Calu3 (cell line): ENCODE measurements at regions of chr17 and their contacts with region 1.

Region 1: GRCh38 chr17:75855310-75856081 is at the start of gene WBP2:
- DNase-seq: peak; percentile 95
- H3K4me3 Mint-ChIP-seq: no peak within 1 kb of the TSS
- H3K27ac Mint-ChIP-seq: no peak within 1 kb of the TSS
- H3K4me1 Mint-ChIP-seq: peaks cover 8% of the 10 kb centered on the region
- H3K27me3 Mint-ChIP-seq: no peaks in the 10 kb centered on the region
- CTCF ChIP-seq: no peak
- total RNA-seq, gene WBP2: 126 and 133 TPM in 2 replicates

Region 2: GRCh38 chr17:75978938-75979704 is 123.6 kb after region 1 on chr17 and contains the starts of genes ACOX1 and TEN1:
- CTCF ChIA-PET with region 1: interaction called, 11 read pairs
- intact Hi-C with region 1: no loop called
- DNase-seq: peak; percentile 98
- H3K4me3 Mint-ChIP-seq: peak within 1 kb of the TSS; percentile 79
- H3K27ac Mint-ChIP-seq: peak within 1 kb of the TSS; percentile 95
- H3K4me1 Mint-ChIP-seq: peaks cover 48% of the 10 kb centered on the region
- H3K27me3 Mint-ChIP-seq: no peaks in the 10 kb centered on the region
- CTCF ChIP-seq: no peak
- total RNA-seq, gene ACOX1: 53.1 and 57.3 TPM in 2 replicates
- total RNA-seq, gene TEN1: 15.3 and 15.8 TPM in 2 replicates

Region 3: GRCh38 chr17:76654408-76654807 is 798.9 kb after region 1 on chr17:
- CTCF ChIA-PET with region 1: no interaction called
- intact Hi-C with region 1: no loop called
- DNase-seq: no peak
- H3K4me3 Mint-ChIP-seq: no peak overlapping the region
- H3K27ac Mint-ChIP-seq: no peak overlapping the region
- H3K4me1 Mint-ChIP-seq: peaks cover 25% of the 10 kb centered on the region
- H3K27me3 Mint-ChIP-seq: no peaks in the 10 kb centered on the region
- CTCF ChIP-seq: no peak